ENCODE measurements at regions of chr3 and their contacts with region 1.

Region 1: GRCh38 chr3:61589856-61590255 is 28.5 kb downstream of the PTPRG start:
- DNase-seq: no peak

Region 2: DNA sequence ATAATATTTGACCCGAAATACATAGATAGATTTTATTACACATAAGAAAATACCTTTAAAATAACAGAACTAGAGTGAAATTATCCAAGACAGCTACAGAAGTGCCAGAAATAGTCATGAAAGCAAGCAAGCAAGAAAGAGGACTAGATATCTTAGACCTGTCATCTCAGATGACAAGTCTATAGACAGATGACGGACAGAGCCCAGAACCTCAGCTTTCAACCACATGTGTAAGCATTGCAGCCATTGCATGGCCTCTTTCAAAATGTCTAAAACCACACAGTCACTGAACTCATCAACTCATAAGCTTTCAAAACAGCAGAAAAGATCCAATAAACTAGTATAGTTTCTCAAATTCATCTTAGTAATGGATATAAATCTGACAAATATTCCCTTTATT is 278.8 kb before region 1 on chr3:
- intact Hi-C with region 1: no loop called
- DNase-seq: no peak

Region 3: GRCh38 chr3:61438253-61439121 is 151.4 kb before region 1 on chr3:
- intact Hi-C with region 1: no loop called
- DNase-seq: no peak

Region 4: DNA sequence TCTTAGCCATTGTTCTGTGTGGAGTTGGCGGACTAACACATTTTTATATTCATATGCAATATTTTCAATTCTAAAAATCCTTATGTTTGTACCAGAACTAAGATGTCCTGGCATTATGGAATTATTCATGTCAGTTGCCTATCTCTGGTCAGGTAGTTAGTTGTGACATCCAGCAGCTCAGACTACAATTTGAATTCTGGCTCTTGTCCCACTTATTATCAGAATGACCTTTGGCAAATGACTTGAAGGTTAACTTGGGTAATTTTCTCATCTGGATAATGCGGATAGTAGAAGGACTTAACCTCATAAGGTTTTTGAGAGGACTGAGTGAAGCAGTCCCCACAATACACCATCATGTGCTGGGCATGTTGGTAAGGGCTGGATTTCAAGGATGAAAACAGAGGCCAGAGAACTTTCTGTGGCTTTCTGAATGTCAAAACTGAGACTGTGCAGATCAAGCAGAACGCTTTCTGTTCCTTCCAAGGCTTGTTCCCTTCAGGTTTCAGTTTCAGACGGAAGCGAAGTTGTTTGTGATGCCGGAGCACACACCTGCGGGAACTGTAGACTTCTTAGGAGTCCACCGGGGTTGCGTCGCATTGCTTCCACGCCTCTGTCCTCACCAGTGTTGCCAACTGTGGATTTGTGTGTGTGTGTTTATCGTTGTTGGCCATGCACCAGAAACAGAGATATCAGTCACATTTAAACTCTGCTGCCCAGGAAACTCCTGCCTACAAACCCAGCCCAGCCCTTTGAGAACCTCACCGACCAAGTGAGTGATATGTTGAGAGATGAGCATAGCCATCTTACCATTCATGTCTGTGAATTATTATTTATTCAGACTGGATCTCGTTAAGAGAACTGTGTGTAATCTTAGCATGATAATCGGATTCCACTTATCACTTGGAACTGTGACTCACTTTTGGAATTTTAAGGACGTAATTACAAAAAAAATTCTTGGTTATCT is 47.5 kb after region 1 on chr3:
- intact Hi-C with region 1: loop called (anchors 5 kb)
- DNase-seq: no peak

Region 5: GRCh38 chr3:61841111-61841853 is 251.4 kb after region 1 on chr3:
- intact Hi-C with region 1: no loop called
- DNase-seq: no peak